Common myeloid progenitor, CD34-positive (primary cell): ENCODE measurements at regions of chr2 and their contacts with region 1.

Region 1: GRCh38 chr2:102240640-102241370 is 54.0 kb downstream of the IL1RL2 start:
- DNase-seq: peak; percentile 84 to 92 (median 88)
- H3K4me3 ChIP-seq: no peak overlapping the region
- H3K27ac ChIP-seq: no peak overlapping the region
- H3K4me1 ChIP-seq: peaks cover 0 to 2% (median 0%) of the 10 kb centered on the region in 4 experiments
- H3K27me3 ChIP-seq: no peaks in the 10 kb centered on the region

Region 2: DNA sequence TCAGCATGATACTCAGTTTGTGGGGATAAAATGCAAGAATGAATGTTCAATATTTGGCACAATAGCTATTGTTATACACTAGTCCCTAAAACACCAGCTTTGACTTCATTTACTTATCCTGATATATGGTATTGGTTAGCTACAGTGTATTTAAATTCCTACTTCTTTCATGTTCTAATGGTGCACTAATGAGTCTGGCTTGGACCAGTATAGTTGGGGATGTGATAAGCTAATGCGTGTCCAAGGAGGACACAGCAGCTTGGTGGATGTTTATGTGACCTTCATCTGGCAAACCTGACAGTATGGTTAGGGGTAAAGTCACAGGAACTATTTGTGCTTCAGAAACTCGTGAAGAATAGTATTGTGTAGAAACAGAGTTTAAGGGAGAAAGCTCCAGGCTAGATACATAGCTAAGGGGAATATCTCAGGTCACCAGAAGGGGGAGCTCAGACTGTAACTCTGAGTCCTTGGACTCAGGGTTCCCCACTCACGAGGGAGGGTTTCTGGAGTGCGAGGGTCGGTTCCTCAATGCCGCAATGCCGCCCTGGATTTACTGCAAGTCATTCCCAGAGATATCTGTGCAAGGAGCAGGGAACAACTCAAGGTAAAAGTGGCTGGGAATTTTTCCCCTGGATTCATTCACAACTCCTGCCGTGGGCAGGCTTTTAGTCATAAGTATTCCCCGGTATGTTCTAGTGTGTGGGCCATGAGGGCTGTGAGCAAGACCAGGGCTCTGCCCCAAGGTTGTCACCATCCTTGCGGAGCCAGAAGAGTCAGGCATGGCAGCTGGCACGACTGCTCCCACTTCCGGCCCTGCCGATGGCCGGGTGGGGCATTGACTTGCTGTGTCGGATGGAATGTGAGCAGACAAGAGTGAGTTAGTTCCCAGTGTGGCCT is 234.6 kb before region 1 on chr2:
- CTCF ChIA-PET with region 1: interaction called, 66 read pairs
- POLR2A ChIA-PET with region 1: no interaction called
- DNase-seq: peak; percentile 68 to 84 (median 76)
- H3K4me3 ChIP-seq: no peak overlapping the region
- H3K27ac ChIP-seq: no peak overlapping the region
- H3K4me1 ChIP-seq: peaks cover 0 to 17% (median 10%) of the 10 kb centered on the region in 4 experiments
- H3K27me3 ChIP-seq: no peaks in the 10 kb centered on the region

Region 3: GRCh38 chr2:102020596-102021181 is 220.1 kb before region 1 on chr2:
- CTCF ChIA-PET with region 1: interaction called, 47 read pairs
- POLR2A ChIA-PET with region 1: no interaction called
- DNase-seq: peak; percentile 74 to 84 (median 80)
- H3K4me3 ChIP-seq: no peak overlapping the region
- H3K27ac ChIP-seq: no peak overlapping the region
- H3K4me1 ChIP-seq: peaks cover 0 to 4% (median 1%) of the 10 kb centered on the region in 4 experiments
- H3K27me3 ChIP-seq: no peaks in the 10 kb centered on the region

Region 4: GRCh38 chr2:102155642-102156491 is 84.9 kb before region 1 on chr2:
- CTCF ChIA-PET with region 1: no interaction called
- POLR2A ChIA-PET with region 1: no interaction called
- DNase-seq: peak in 2 of 3 donors; percentile 10 to 24
- H3K4me3 ChIP-seq: no peak overlapping the region
- H3K27ac ChIP-seq: no peak overlapping the region
- H3K4me1 ChIP-seq: no peaks in the 10 kb centered on the region
- H3K27me3 ChIP-seq: no peaks in the 10 kb centered on the region

Region 5: DNA sequence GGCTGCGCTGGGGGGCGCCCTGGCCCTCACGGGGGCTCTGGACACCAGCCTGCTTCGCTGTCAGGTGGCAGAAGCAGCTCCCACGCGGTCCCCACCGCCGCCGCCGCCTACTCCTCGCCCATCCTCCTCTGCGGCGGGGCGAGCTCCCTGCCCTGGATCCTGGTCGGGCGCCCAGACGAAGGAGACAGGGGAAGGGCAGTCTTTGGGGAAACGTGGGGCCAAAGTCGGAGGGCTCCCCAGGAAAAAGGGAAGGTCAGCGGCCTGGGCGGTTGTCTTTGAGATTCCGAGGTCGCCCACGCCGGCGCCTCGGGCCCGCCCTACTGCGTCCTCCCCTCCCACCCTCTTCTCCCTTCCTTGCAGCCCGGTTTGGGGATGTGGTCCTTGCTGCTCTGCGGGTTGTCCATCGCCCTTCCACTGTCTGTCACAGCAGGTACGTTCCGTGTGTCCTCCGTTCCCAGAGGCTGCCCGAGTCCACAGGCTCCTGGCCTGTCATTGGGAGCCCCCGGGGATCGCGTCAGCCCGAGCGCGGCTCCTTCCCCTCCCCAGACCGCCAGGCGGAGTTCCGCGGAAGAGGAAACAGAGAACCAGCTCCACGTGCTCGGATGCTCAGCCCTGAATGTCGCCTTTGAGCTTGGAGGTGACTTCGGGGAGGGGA is 53.2 kb before region 1 on chr2:
- CTCF ChIA-PET with region 1: interaction called, 19 read pairs
- POLR2A ChIA-PET with region 1: no interaction called
- DNase-seq: peak; percentile 36 to 52 (median 49)
- H3K4me3 ChIP-seq: peak overlapping the region in 6 of 7 experiments; percentile 6 to 75 (median 52)
- H3K27ac ChIP-seq: no peak overlapping the region
- H3K4me1 ChIP-seq: peaks cover 0 to 12% (median 4%) of the 10 kb centered on the region in 4 experiments
- H3K27me3 ChIP-seq: peaks cover 0 to 14% (median 0%) of the 10 kb centered on the region in 5 experiments

Region 6: GRCh38 chr2:102226612-102227391 is 14.0 kb before region 1 on chr2:
- CTCF ChIA-PET with region 1: interaction called, 16 read pairs
- POLR2A ChIA-PET with region 1: no interaction called
- DNase-seq: peak in 1 of 3 donors; percentile 13
- H3K4me3 ChIP-seq: no peak overlapping the region
- H3K27ac ChIP-seq: peak overlapping the region in 1 of 2 experiments; percentile 70
- H3K4me1 ChIP-seq: peaks cover 3 to 45% (median 25%) of the 10 kb centered on the region in 4 experiments
- H3K27me3 ChIP-seq: no peaks in the 10 kb centered on the region

Region 7: GRCh38 chr2:102271844-102272243 is 31.0 kb after region 1 on chr2:
- CTCF ChIA-PET with region 1: no interaction called
- POLR2A ChIA-PET with region 1: no interaction called
- DNase-seq: peak in 2 of 3 donors; percentile 44 to 47
- H3K4me3 ChIP-seq: no peak overlapping the region
- H3K27ac ChIP-seq: no peak overlapping the region
- H3K4me1 ChIP-seq: peaks cover 0 to 10% (median under 1%) of the 10 kb centered on the region in 4 experiments
- H3K27me3 ChIP-seq: no peaks in the 10 kb centered on the region

Region 8: GRCh38 chr2:102336502-102336945 is 95.7 kb after region 1 on chr2:
- CTCF ChIA-PET with region 1: no interaction called
- POLR2A ChIA-PET with region 1: no interaction called
- DNase-seq: peak in 1 of 3 donors; percentile 20
- H3K4me3 ChIP-seq: no peak overlapping the region
- H3K27ac ChIP-seq: no peak overlapping the region
- H3K4me1 ChIP-seq: peaks cover 0 to 19% (median 13%) of the 10 kb centered on the region in 4 experiments
- H3K27me3 ChIP-seq: no peaks in the 10 kb centered on the region

Region 9: GRCh38 chr2:102436323-102436722 is 195.5 kb after region 1 on chr2:
- CTCF ChIA-PET with region 1: interaction called, 16 read pairs
- POLR2A ChIA-PET with region 1: no interaction called
- DNase-seq: peak in 1 of 3 donors; percentile 12
- H3K4me3 ChIP-seq: no peak overlapping the region
- H3K27ac ChIP-seq: no peak overlapping the region
- H3K4me1 ChIP-seq: peaks cover 7 to 28% (median 19%) of the 10 kb centered on the region in 4 experiments
- H3K27me3 ChIP-seq: no peaks in the 10 kb centered on the region

Region 10: DNA sequence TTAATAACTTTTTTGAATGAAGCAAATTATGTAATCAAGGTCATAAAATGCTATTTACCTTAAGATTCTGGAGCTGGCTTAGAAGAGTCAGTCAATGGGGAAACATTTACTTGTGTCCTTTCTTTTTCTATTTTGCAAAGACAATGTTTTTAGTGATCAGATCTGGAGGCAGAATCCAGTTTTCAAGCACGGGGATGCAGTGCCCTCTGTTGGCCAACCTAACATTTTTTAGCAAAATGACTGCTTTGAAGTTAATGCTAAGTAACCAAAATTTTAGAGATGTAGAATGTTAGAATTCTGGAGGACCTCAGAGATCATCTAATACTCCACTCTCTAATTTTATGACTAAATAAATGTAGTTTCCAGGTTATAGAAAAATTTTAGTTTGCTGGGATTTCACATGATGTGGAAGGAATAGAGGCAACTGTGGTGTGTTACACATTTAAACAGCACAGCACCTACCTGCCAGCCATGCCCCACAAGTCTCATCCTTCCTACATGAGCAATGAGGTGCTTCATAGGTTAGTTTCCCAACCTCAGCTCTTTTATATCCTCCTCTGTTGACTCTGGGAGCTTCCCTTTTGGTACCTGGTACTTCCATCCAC is 208.7 kb after region 1 on chr2:
- CTCF ChIA-PET with region 1: interaction called, 33 read pairs
- POLR2A ChIA-PET with region 1: interaction called, 3 read pairs
- DNase-seq: peak; percentile 48 to 79 (median 69)
- H3K4me3 ChIP-seq: no peak overlapping the region
- H3K27ac ChIP-seq: no peak overlapping the region
- H3K4me1 ChIP-seq: peaks cover 0 to 10% (median 3%) of the 10 kb centered on the region in 4 experiments
- H3K27me3 ChIP-seq: no peaks in the 10 kb centered on the region

Region 11: GRCh38 chr2:102540641-102541281 is 300.0 kb after region 1 on chr2:
- CTCF ChIA-PET with region 1: no interaction called
- POLR2A ChIA-PET with region 1: no interaction called
- DNase-seq: no peak
- H3K4me3 ChIP-seq: no peak overlapping the region
- H3K27ac ChIP-seq: no peak overlapping the region
- H3K4me1 ChIP-seq: no peaks in the 10 kb centered on the region
- H3K27me3 ChIP-seq: peaks cover 0 to 2% (median 0%) of the 10 kb centered on the region in 5 experiments